ENCODE measurements at regions of chr3 and their contacts with region 1.

Region 1: GRCh38 chr3:16264708-16265454 is at the starts of genes DPH3 and OXNAD1:
- DNase-seq: peak; percentile 100
- H3K4me3 Mint-ChIP-seq: peak within 1 kb of the TSS; percentile 97
- H3K27ac Mint-ChIP-seq: peak within 1 kb of the TSS; percentile 98
- H3K4me1 Mint-ChIP-seq: peaks cover 33% of the 10 kb centered on the region
- H3K27me3 Mint-ChIP-seq: no peaks in the 10 kb centered on the region
- total RNA-seq, gene DPH3: 27.6 and 30.1 TPM in 2 replicates
- total RNA-seq, gene OXNAD1: 27.1 and 29.8 TPM in 2 replicates

Region 2: GRCh38 chr3:14651440-14652251 is 1613.2 kb before region 1 on chr3 and contains the start of gene CCDC174:
- intact Hi-C with region 1: loop called (anchors 10 kb)
- DNase-seq: peak; percentile 99
- H3K4me3 Mint-ChIP-seq: peak within 1 kb of the TSS; percentile 100
- H3K27ac Mint-ChIP-seq: peak within 1 kb of the TSS; percentile 95
- H3K4me1 Mint-ChIP-seq: peaks cover 38% of the 10 kb centered on the region
- H3K27me3 Mint-ChIP-seq: peaks cover 3% of the 10 kb centered on the region
- total RNA-seq, gene CCDC174: 16.0 and 16.8 TPM in 2 replicates

Region 3: DNA sequence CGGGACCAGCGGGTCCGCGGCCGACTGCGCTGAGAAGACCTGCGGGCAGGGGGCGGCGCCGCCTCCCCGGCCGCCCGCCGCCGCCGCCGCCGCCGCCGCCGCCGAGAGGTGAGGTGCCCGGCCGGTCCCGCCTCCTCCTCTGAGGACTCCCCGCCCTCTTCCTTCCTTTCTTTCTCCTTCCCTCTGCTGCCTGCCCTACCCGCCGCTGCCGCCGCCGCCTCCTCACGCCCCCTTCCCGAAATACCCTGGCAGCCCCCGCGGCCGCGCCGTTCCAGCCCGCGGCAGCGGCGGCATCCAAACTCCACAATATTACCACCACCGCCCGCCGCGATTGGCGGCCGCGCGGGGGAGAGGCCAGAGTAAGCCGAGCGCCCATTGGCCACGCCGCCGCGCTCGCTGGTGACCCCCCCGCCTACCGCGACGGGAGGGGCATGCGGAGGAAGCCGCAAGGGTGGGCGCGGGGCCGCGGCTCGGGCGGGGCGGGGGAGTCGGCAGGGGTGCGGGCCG is 405.3 kb before region 1 on chr3:
- intact Hi-C with region 1: loop called (anchors 5 kb)
- DNase-seq: peak; percentile 94
- H3K4me3 Mint-ChIP-seq: peak overlapping the region; percentile 92
- H3K27ac Mint-ChIP-seq: peak overlapping the region; percentile 96
- H3K4me1 Mint-ChIP-seq: peaks cover 25% of the 10 kb centered on the region
- H3K27me3 Mint-ChIP-seq: peaks cover 9% of the 10 kb centered on the region

Region 4: GRCh38 chr3:16300881-16301359 is 36.0 kb after region 1 on chr3:
- intact Hi-C with region 1: loop called (anchors 5 kb)
- DNase-seq: peak; percentile 90
- H3K4me3 Mint-ChIP-seq: peak overlapping the region; percentile 86
- H3K27ac Mint-ChIP-seq: peak overlapping the region; percentile 97
- H3K4me1 Mint-ChIP-seq: peaks cover 83% of the 10 kb centered on the region
- H3K27me3 Mint-ChIP-seq: no peaks in the 10 kb centered on the region

Region 5: DNA sequence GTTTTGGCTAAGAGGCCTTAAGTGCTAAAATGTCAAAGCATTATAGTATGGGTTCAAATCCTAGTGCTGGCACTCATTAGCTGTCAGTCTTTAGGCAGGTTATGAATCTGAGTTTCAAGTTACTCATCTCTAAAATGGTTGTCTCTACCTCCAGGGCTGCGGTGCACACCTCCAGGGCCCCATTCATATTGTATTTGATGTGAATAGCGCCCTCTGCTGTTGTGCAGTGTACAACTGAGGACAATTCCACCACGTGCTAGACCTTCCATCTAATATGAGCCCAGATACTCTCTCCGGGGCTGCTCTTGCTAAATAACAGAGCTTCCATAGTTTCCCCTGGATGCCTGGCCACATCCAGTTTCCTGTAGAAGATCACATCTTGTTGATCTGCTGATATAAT is 54.4 kb after region 1 on chr3:
- intact Hi-C with region 1: loop called (anchors 1 kb)
- DNase-seq: peak; percentile 94
- H3K4me3 Mint-ChIP-seq: peak overlapping the region; percentile 35
- H3K27ac Mint-ChIP-seq: peak overlapping the region; percentile 80
- H3K4me1 Mint-ChIP-seq: peaks cover 61% of the 10 kb centered on the region
- H3K27me3 Mint-ChIP-seq: no peaks in the 10 kb centered on the region

Region 6: DNA sequence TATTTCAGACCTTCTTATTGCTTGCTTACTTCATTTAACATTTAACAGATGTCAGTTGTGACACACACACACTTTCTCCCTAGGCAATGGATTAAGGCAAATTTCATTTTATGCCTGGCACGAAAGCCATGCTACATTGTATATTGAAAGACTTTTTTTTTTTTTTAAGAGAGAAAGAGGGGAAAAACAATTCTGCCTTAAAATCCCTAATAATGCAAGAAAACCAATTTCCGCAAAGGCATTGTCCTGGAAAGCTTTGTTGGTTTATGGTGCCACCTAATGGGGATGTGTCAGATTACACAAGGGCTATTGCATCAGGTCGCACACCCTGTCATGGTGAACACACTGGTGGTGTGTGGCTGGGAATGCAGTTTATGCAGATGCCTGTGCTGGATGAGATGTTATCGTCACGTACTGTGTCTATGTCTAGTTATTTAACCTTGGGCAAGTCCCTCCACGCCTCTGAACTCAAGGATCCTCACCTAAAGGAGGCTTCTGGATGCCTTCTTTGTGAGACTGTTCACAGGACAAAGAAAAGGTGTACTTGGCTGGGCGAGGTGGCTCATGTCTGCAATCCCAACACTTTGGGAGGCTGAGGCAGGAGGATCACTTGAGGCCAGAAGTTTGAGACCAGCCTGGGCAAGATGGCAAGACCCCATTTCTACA is 285.9 kb after region 1 on chr3:
- intact Hi-C with region 1: loop called (anchors 1 kb)
- DNase-seq: peak; percentile 94
- H3K4me3 Mint-ChIP-seq: no peak overlapping the region
- H3K27ac Mint-ChIP-seq: peak overlapping the region; percentile 71
- H3K4me1 Mint-ChIP-seq: peaks cover 11% of the 10 kb centered on the region
- H3K27me3 Mint-ChIP-seq: peaks cover 13% of the 10 kb centered on the region

Region 7: GRCh38 chr3:17742108-17742879 is 1477.4 kb after region 1 on chr3 and contains the start of gene TBC1D5:
- intact Hi-C with region 1: loop called (anchors 10 kb)
- DNase-seq: peak; percentile 97
- H3K4me3 Mint-ChIP-seq: peak within 1 kb of the TSS; percentile 95
- H3K27ac Mint-ChIP-seq: peak within 1 kb of the TSS; percentile 98
- H3K4me1 Mint-ChIP-seq: peaks cover 34% of the 10 kb centered on the region
- H3K27me3 Mint-ChIP-seq: no peaks in the 10 kb centered on the region
- total RNA-seq, gene TBC1D5: 38.5 and 39.0 TPM in 2 replicates

Measured in activated CD4-positive, alpha-beta T cell treated with anti-CD3 and anti-CD28 coated beads, Interleukin-2, amount 10 ng/mL, durations not matched to agents 24 days and 14 days (primary cell).